ENCODE measurements at regions of chr10 and their contacts with region 1.

Region 1: GRCh38 chr10:27072436-27073114 is 27.7 kb downstream of the ANKRD26 start:
- DNase-seq: no peak
- ATAC-seq: no peak

Region 2: DNA sequence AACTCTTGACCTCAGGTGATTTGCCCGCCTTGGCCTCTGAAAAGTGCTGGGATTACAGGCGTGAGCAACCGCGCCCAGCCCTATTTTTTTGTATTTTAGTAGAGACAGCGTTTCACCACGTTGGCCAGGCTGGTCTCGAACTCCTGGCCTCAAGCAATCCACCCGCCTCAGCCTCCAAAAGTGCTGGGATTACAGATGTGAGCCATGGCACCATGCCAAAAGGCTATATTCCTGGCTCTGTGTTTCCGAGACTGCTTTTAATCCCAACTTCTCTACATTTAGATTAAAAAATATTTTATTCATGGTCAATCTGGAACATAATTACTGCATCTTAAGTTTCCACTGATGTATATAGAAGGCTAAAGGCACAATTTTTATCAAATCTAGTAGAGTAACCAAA is 38.7 kb after region 1 on chr10:
- intact Hi-C with region 1: loop called (anchors 5 kb)
- DNase-seq: no peak
- ATAC-seq: no peak

Measured in Right ventricle myocardium inferior (tissue), 1 donor.